CD4-positive, alpha-beta memory T cell (primary cell): ENCODE measurements at regions of chrX and their contacts with region 1.

Region 1: GRCh38 chrX:79325263-79325958 is 41.7 kb downstream of the ITM2A start:
- DNase-seq: peak; percentile 50 to 65 (median 62)
- H3K4me3 ChIP-seq: peak overlapping the region in 1 of 2 donors; percentile 9
- H3K4me3 Mint-ChIP-seq: peak overlapping the region; percentile 79 to 92 (median 86)
- H3K27ac ChIP-seq: peak overlapping the region; percentile 42
- H3K27ac Mint-ChIP-seq: peak overlapping the region; percentile 87 to 97 (median 95)
- H3K4me1 ChIP-seq: peaks cover 11% of the 10 kb centered on the region
- H3K4me1 Mint-ChIP-seq: peaks cover 14 to 27% (median 21%) of the 10 kb centered on the region in 4 donors
- H3K27me3 ChIP-seq: no peaks in the 10 kb centered on the region
- H3K27me3 Mint-ChIP-seq: no peaks in the 10 kb centered on the region

Region 2: GRCh38 chrX:79361192-79361870 is 35.9 kb after region 1 on chrX:
- CTCF ChIA-PET with region 1: interaction called, 4 read pairs
- POLR2A ChIA-PET with region 1: interaction called, 19 read pairs
- intact Hi-C with region 1: loop called (anchors 5 kb)
- DNase-seq: peak; percentile 38 to 66 (median 48)
- H3K4me3 ChIP-seq: no peak overlapping the region
- H3K4me3 Mint-ChIP-seq: peak overlapping the region in 7 of 8 donors; percentile 23 to 61 (median 44)
- H3K27ac ChIP-seq: peak overlapping the region; percentile 46
- H3K27ac Mint-ChIP-seq: peak overlapping the region; percentile 67 to 97 (median 86)
- H3K4me1 ChIP-seq: peaks cover 32% of the 10 kb centered on the region
- H3K4me1 Mint-ChIP-seq: peaks cover 16 to 29% (median 22%) of the 10 kb centered on the region in 4 donors
- H3K27me3 ChIP-seq: no peaks in the 10 kb centered on the region
- H3K27me3 Mint-ChIP-seq: no peaks in the 10 kb centered on the region